Activated CD4-positive, alpha-beta memory T cell treated with anti-CD3 and anti-CD28 coated beads for 36 hours (primary cell): ENCODE measurements at regions of chr1 and their contacts with region 1.

Region 1: DNA sequence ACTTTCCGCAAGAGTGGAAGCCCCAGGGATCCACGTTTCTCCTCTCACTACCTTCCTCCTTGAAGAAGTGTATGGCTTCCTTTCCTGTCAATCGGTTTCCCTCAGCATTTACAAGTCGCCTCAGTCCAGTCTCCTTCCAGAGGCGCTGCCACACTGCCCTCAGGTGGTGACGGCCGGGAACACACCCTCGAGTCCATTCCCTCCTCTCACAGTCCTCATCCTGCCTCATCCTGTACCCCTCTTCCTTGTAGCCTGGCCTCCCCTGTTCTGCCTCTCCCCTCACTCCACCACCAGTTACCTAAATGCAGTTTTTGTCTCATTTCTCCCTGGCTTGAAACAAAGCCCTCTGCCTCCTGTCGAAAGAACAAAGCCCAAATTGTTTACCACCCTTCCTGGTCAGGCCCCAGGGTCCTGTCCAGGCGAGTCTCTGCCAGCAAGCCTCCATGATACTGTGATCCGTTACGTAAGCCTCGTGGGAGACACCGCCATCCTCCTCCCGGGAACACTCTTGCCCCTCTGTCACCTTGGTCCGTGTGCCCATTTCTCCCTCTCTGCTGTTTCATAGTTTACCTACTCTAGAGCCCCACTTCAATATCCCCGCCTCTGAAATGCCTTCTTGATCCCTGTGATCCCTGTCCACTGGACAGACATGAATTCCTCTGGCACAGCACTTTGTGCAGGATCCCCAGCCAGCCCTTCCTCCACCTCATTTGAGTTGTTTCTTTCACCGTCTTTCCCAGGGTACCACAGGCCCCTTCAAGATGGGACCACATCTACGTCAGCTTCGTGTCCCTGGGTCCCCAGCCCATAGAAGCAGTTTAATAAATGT is 23.3 kb upstream of the LSM10 start:
- DNase-seq: peak; percentile 96
- H3K4me3 Mint-ChIP-seq: no peak overlapping the region
- H3K27ac Mint-ChIP-seq: peak overlapping the region; percentile 90
- H3K4me1 Mint-ChIP-seq: peaks cover 21% of the 10 kb centered on the region
- H3K27me3 Mint-ChIP-seq: no peaks in the 10 kb centered on the region

Region 2: GRCh38 chr1:36099681-36100341 is 321.2 kb before region 1 on chr1:
- CTCF ChIA-PET with region 1: interaction called, 5 read pairs
- POLR2A ChIA-PET with region 1: no interaction called
- intact Hi-C with region 1: loop called (anchors 5 kb)
- DNase-seq: peak; percentile 84
- H3K4me3 Mint-ChIP-seq: no peak overlapping the region
- H3K27ac Mint-ChIP-seq: no peak overlapping the region
- H3K4me1 Mint-ChIP-seq: no peaks in the 10 kb centered on the region
- H3K27me3 Mint-ChIP-seq: no peaks in the 10 kb centered on the region

Region 3: DNA sequence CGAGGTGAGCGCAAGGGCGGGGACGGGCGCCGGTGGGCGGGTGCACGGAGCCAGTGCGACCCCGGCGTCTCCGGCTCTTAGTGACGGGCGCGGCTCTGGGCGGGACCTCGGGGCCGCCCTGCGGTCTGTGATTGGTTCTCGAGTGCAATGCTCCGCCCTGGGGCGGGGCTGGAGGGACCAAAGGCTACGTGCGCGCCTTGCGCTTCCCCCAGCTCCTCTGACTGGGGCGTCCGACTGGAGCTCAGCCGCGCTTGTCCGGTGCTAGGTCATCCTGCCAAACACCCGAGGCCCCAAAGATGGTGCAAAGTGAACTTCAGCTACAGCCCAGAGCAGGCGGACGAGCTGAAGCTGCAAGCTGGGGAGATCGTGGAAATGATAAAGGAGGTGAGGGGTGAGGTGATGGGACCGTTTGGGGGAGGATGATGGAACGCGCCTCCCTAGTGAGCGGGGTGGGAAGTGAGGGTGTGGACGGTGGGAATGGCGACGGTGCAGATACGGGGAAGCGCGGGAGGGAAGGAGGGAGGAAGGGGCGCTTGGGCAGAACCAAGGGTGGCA is 114.1 kb before region 1 on chr1:
- CTCF ChIA-PET with region 1: interaction called, 5 read pairs
- POLR2A ChIA-PET with region 1: no interaction called
- intact Hi-C with region 1: loop called (anchors 2 kb)
- DNase-seq: peak; percentile 95
- H3K4me3 Mint-ChIP-seq: peak overlapping the region; percentile 95
- H3K27ac Mint-ChIP-seq: peak overlapping the region; percentile 79
- H3K4me1 Mint-ChIP-seq: peaks cover 43% of the 10 kb centered on the region
- H3K27me3 Mint-ChIP-seq: no peaks in the 10 kb centered on the region

Region 4: DNA sequence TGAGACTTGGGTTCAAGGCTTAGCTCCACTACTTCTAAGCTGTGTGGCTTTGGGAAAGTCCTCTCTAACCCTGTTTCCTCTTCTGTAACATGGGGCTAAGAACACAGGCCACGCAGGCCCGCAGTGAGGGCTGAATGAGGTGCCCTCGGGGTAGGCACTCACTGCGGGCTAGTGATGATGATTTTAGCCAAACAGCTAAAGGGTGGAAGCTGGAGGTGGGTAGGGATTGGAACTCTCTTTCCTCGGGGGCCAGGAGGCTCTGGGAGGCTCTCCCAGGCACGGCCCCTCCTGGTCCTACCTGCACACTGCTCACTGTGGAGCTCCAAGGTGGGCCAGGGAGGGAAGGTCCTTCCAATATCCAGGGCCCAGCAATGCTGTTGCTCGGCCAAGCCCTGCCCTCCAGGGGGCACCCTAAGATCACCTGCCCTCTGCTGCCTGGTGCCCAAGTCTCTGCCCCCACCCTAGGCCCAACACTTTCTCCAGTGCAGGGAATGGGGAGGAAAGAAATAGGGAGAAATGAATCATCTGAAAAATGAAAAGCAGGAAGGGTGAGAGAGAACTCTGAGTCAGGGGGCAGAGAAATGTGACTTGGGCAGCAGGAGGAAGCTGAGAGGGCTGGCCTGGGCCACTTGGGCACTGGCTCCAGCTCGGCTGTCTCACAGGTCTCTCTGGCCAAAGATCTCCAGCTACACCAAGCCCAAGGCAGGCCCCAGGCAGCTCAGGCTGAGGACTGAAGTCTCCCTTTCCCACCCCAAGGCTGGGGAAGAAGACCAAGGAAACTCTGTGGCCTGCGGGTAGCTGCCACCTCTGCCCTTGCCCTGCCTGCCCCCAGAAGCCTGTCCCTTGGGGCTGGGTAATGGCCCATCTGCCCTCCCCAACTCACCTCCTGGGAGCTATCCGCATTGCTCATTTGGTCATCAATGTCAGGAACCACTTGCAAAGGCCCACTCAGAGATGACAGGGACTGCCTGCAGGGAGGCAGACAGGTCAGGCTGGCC is 78.3 kb before region 1 on chr1:
- CTCF ChIA-PET with region 1: interaction called, 56 read pairs
- POLR2A ChIA-PET with region 1: no interaction called
- intact Hi-C with region 1: loop called (anchors 1 kb)
- DNase-seq: peak; percentile 70
- H3K4me3 Mint-ChIP-seq: no peak overlapping the region
- H3K27ac Mint-ChIP-seq: no peak overlapping the region
- H3K4me1 Mint-ChIP-seq: peaks cover 16% of the 10 kb centered on the region
- H3K27me3 Mint-ChIP-seq: no peaks in the 10 kb centered on the region

Region 5: GRCh38 chr1:36350659-36351226 is 70.3 kb before region 1 on chr1:
- CTCF ChIA-PET with region 1: interaction called, 6 read pairs
- POLR2A ChIA-PET with region 1: no interaction called
- intact Hi-C with region 1: loop called (anchors 2 kb)
- DNase-seq: peak; percentile 67
- H3K4me3 Mint-ChIP-seq: no peak overlapping the region
- H3K27ac Mint-ChIP-seq: peak overlapping the region; percentile 73
- H3K4me1 Mint-ChIP-seq: peaks cover 32% of the 10 kb centered on the region
- H3K27me3 Mint-ChIP-seq: no peaks in the 10 kb centered on the region

Region 6: DNA sequence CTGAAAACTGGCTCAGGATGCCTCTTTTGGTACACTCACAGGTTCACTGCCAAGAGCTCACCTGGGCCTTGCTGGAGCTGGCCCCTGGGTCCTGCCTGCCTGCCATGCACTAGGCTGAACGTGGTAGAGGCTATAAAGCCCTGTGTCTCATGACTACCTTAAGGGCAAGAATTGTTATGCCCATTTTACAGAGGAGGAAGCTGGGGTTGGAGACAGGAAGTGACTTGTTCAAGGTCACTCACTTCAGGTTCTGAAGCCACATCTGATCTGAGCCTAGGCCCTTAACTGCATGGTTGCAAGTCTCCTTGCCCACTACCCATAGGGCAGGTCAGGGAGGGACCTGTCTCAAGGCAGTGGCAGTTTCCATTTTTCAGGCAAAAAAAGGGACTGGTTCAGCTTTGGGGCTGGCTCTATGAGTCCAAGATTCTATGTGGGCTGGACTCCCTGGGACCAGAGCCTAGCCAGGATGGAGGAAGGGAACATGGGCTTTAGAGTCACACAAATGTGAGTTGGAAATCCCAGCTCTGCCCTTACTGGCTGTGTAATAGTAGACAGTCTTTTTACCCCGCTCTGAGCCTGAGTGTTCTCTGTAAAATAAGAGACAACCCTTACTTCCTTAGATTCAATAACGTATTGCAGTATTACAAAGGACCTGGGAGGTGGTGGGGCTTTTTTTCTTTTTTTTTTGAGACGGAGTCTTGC is 43.1 kb before region 1 on chr1:
- CTCF ChIA-PET with region 1: no interaction called
- POLR2A ChIA-PET with region 1: no interaction called
- intact Hi-C with region 1: no loop called
- DNase-seq: no peak
- H3K4me3 Mint-ChIP-seq: no peak overlapping the region
- H3K27ac Mint-ChIP-seq: peak overlapping the region; percentile 84
- H3K4me1 Mint-ChIP-seq: peaks cover 80% of the 10 kb centered on the region
- H3K27me3 Mint-ChIP-seq: no peaks in the 10 kb centered on the region